Sciatic nerve (tissue), 2 donors: ENCODE measurements at regions of chr3 and their contacts with region 1.

Region 1: GRCh38 chr3:150352931-150353330 is 55.2 kb upstream of the TSC22D2 start:
- DNase-seq: no peak
- ATAC-seq: no peak

Region 2: DNA sequence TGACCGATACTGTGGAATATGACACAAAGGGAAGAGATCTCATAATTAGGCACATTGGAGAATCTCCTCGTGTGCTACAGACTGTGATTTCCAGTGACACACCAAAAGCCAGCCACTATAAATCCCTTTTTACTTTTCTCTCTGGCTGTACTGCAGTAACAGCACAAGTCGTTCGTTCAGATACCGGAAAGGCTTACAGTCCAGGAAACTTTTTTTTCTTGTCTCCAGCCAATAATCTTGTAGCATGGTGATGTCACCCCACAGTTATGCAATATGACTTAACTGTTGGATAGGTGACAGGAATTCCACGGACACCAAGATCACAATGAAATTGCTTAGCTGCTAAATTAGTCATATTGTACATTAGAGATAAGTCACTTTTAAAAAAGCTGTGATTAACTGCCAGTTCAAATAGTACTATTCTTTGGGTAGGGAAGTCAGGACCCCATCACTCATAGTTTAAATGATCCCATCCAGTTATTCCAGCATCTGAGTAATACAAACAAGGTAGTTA is 18.9 kb after region 1 on chr3:
- intact Hi-C with region 1: loop called (anchors 2 kb)
- DNase-seq: no peak
- ATAC-seq: peak; percentile 94